A673 (cell line): ENCODE measurements at regions of chr4 and their contacts with region 1.

Region 1: DNA sequence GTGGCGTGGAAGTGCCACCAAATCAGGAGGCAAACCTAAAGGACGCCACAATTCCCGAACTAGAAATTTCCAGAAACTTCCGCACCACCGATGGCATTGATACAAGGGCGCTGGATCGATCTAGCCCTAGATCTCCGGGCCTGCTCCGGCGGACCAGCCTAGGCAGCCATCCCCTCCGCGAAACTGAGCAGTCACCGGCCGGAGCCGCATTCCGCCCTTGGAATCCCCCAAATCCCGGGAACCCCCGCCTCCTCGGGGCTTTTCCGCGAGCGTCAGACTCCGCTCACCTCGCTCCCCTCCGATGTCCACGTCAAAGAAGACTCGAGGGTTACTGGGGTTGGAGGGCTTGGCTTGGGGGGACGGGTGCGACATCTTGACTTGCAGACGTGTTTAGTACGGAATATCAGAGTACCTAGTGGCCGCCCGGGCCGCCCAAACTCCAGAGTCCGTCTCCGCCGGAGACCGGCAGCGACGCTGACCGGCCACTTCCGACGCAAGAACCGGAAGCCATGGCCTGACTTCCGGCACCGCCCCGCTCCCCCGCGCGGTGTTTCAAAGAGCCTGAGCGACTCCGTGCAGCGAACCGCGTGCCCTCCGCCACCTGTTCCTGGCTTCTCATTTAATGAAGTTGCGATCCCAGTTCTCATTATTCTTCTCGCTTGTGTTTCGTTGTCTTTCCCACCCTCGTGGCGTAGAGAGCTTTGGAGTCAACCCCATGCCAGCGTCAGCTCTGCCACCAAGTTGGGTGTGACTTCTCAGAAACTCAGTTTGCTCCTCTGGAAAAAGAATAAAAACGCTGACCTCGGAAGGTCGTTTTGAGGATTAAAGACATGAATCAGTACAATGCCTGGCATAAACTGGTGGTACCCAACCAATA is at the start of gene PPID:
- DNase-seq: peak; percentile 93
- H3K4me3 ChIP-seq: peak within 1 kb of the TSS; percentile 68
- H3K27ac ChIP-seq: peak within 1 kb of the TSS; percentile 80
- H3K4me1 ChIP-seq: peaks cover 8% of the 10 kb centered on the region
- H3K27me3 ChIP-seq: peaks cover 5% of the 10 kb centered on the region
- CTCF ChIP-seq: no peak
- total RNA-seq, gene PPID: 79.4 and 87.6 TPM in 2 replicates

Region 2: DNA sequence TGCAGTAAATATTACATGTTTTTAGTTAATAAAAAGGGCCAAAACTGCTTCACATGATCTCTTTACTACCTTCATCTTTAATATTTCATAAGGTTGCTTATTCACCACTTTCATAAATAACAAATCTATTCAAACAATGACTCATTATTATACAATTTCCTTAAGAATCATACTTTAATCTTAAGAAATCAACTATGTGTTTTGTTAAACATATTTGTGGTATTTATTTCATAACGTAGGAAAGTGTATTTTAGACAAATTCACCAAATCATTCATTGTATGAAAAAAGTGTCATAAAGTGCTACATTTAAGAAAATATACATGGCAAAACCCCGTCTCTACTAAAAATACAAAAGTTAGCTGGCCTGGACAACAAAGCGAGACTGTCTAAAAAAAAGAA is 352.0 kb before region 1 on chr4:
- CTCF ChIA-PET with region 1: no interaction called
- POLR2A ChIA-PET with region 1: no interaction called
- intact Hi-C with region 1: no loop called
- DNase-seq: no peak
- H3K4me3 ChIP-seq: no peak overlapping the region
- H3K27ac ChIP-seq: no peak overlapping the region
- H3K4me1 ChIP-seq: no peaks in the 10 kb centered on the region
- H3K27me3 ChIP-seq: no peaks in the 10 kb centered on the region
- CTCF ChIP-seq: no peak

Region 3: DNA sequence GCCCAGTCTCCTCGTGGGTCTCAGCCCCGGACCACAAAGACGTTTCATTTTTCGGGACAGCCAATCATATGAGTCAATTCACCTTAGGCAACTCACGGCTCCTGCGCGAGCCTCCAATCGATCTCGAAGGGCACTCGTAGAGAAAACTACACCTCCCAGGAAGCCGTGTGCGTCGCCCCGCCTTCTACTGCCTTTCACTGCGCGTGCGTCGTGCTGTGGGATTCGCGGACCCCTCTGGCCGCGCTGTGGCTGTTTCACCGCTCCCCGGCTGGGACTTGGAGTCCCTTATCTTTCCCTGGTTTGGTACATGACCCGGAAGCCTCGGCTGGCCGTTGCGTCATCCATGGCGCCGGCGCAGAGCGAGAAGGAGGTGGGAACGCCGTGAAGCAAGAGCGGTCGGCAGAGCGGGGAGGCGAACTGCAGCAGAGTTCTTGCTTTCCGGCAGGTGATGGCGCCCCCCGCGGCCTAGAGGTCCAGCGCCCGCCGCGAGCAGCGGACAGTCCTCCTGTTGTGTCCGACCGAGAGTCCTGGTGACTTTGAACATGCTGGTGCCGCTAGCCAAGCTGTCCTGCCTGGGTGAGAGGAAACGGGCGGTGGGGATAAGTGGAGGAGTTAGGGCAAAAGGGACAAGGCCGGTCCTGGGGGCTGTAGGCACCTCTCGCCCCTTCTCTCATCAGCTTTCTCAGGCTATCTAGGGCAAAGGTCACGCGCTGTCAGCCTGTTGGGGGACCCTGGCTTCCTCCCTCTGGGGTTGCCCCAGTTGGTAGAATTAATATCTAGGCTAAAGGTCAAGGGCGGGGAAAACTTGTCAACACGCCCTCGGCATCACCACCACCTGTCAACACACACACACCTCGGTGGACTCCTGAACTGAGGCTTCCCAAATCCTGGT is 51.0 kb before region 1 on chr4 and contains the start of gene ETFDH:
- CTCF ChIA-PET with region 1: no interaction called
- POLR2A ChIA-PET with region 1: no interaction called
- intact Hi-C with region 1: loop called (anchors 1 kb)
- DNase-seq: peak; percentile 100
- H3K4me3 ChIP-seq: peak within 1 kb of the TSS; percentile 85
- H3K27ac ChIP-seq: peak within 1 kb of the TSS; percentile 92
- H3K4me1 ChIP-seq: peaks cover 14% of the 10 kb centered on the region
- H3K27me3 ChIP-seq: no peaks in the 10 kb centered on the region
- CTCF ChIP-seq: peak; percentile 89
- total RNA-seq, gene ETFDH: 38.0 and 39.0 TPM in 2 replicates

Region 4: DNA sequence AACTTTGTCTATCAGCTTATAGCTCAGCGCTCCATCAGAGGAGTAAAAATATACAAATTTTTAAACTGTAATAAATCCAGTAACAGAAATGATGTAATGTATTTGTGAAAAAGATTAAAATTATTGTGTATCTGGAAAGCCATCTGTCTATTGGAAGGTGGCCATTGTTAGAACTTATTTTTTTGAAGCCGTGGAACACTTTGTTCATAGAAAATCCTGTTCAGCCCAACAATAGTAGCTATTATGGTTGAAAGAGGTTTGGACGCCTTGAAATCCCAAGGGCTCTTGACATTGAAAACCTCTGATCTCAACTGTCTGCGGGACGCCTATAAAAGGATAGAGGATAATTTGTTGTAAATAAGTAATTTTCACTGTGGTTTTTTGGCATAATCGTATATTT is 478.0 kb after region 1 on chr4:
- CTCF ChIA-PET with region 1: interaction called, 12 read pairs
- POLR2A ChIA-PET with region 1: no interaction called
- intact Hi-C with region 1: no loop called
- DNase-seq: peak; percentile 21
- H3K4me3 ChIP-seq: no peak overlapping the region
- H3K27ac ChIP-seq: no peak overlapping the region
- H3K4me1 ChIP-seq: no peaks in the 10 kb centered on the region
- H3K27me3 ChIP-seq: no peaks in the 10 kb centered on the region
- CTCF ChIP-seq: no peak